ENCODE measurements at regions of chr11 and their contacts with region 1.

Region 1: DNA sequence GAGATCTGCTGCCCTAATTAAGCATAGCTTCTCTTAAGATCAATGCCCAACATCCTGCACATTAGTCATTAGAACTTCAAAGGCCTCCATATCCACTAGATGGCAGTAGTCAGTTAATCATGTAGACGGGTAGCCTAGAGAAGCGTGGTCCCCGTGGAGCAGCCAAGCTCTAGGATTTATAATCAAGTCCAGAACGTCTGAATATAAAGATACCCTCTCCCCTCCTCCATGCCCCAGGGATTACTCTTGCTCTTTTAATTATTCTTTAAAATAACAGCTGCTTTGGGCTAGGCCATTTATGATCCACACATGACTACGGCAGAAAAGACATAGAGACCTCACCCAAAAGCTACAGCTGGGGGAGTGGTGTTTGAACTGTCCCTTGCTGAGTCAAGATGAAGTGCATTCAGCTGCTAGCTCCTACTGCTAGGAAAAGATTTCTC is 327.6 kb upstream of the PLET1 start:
- DNase-seq: peak; percentile 48
- CTCF ChIP-seq: peak; percentile 64

Region 2: DNA sequence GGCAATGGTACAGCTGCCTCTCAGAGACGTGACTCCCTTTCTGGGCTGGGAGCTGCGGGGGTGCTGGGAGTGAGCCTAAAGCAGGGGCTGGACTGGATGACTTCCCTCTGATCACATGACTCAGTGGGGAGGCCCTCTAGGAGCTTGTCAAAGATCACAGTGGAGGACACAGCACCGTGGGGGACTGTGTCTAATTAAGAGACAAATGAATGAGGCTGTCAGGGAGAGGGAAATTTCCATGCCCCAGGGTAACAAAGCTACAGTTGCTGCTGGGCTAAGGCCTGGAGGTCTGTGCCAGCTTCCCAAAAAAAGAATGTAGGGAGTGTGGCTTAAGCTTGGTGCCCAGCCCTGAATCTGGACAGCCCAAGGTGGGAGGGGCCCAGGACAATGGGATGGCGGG is 64.8 kb before region 1 on chr11:
- CTCF ChIA-PET with region 1: interaction called, 10 read pairs
- POLR2A ChIA-PET with region 1: no interaction called
- DNase-seq: no peak
- CTCF ChIP-seq: no peak

Region 3: DNA sequence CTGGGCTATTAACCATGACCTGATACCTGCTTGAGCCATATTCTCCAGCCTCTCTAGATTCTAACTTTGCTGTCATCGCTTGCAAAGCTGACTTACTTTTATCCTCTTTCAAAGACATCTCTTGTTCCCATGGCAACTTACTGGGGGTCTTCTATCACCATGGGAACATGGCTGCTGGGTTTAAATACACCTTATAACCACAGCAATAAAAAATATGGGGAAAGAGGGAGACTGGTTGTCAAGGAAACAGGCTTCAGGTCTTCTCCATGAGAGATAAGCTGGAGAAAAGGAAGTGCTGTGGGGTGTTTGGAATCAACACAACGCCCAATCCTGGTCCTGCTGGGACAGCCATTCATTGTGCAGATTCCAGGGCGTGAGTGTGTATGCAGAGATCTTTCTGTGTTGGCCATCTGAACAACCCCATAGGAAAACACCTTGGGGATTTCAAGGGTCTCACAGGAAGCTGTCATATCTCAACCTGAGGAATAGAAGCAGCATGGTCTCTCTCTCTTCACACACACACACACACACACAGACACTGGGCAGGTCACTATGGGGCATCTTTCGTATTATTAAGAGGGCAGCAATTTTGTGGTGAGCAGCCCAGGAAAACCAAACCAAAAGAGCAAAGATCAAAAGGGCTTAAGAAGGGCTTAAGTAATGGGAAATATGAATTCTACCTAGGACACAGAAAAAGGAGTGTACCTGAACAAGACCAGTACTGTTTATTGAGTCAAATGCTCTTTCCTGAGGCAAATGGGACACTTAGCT is 28.2 kb after region 1 on chr11:
- CTCF ChIA-PET with region 1: interaction called, 13 read pairs
- POLR2A ChIA-PET with region 1: no interaction called
- DNase-seq: no peak
- CTCF ChIP-seq: no peak

Region 4: GRCh38 chr11:112795142-112795815 is 207.0 kb after region 1 on chr11:
- CTCF ChIA-PET with region 1: interaction called, 31 read pairs
- POLR2A ChIA-PET with region 1: no interaction called
- DNase-seq: peak; percentile 67
- CTCF ChIP-seq: peak; percentile 53

Region 5: DNA sequence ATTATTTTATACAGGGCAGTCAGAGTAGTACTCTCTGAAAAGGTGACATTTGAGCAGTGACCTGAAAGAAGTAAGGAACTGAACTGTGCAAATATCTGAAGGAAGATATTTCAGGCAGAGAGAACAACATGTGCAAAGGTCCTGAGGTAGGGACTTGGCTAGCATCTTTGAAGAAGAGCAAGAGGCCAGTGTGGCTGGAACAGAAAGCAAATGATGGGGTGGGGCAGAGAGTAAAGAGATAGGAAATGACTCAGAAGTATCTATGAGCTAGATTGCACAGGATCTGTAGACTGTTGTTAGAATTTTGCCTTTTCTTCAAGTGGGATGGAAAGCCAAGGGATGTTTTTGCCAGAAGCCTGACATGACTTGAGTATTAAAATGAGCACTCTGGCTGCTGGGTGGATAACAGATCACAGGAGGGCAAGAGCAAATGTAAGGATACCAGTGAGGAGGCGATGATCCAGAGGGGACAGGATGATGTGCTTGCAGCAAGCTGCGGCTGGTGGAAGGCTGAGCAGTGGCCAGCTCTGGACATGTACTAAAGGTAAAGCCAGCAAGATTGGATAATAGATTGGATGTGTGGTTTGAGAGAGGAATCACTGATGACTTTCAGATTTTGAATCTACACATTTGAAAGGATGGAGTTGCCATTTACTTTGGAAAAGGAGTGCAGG is 692.9 kb after region 1 on chr11:
- CTCF ChIA-PET with region 1: interaction called, 10 read pairs
- POLR2A ChIA-PET with region 1: no interaction called
- DNase-seq: no peak
- CTCF ChIP-seq: no peak

Measured in GM10248 (cell line).